PC-9 (cell line): ENCODE measurements at regions of chr13 and their contacts with region 1.

Region 1: GRCh38 chr13:59658027-59658737 is 505.5 kb downstream of the DIAPH3 start:
- DNase-seq: no peak
- H3K4me3 ChIP-seq: no peak overlapping the region
- H3K27ac ChIP-seq: no peak overlapping the region
- H3K4me1 ChIP-seq: no peaks in the 10 kb centered on the region
- H3K27me3 ChIP-seq: no peaks in the 10 kb centered on the region
- CTCF ChIP-seq: no peak

Region 2: DNA sequence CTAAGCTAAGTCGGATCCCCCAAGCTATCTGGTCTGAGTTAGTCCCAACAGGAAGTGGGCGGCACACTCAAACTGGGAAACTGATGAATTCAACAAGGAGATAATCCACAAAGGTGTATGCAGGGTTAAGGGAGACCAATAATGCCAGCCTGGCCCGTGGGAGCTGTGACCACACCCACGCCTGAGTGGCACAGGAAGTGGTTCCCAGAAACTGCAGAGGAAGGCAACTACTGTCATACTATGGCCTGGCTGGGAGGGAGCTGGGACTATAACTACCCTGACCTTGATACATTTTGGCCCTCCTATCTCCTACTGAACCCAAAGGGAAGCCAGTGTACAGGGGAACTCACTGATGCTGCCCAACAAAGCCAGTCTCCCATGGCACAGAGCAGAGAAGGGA is 653.3 kb after region 1 on chr13:
- CTCF ChIA-PET with region 1: no interaction called
- POLR2A ChIA-PET with region 1: no interaction called
- intact Hi-C with region 1: no loop called
- DNase-seq: no peak
- H3K4me3 ChIP-seq: no peak overlapping the region
- H3K27ac ChIP-seq: no peak overlapping the region
- H3K4me1 ChIP-seq: no peaks in the 10 kb centered on the region
- H3K27me3 ChIP-seq: no peaks in the 10 kb centered on the region
- CTCF ChIP-seq: no peak

Region 3: GRCh38 chr13:60617991-60618733 is 960.0 kb after region 1 on chr13:
- CTCF ChIA-PET with region 1: interaction called, 14 read pairs
- POLR2A ChIA-PET with region 1: no interaction called
- intact Hi-C with region 1: no loop called
- DNase-seq: peak in 1 of 2 experiments; percentile 1
- H3K4me3 ChIP-seq: no peak overlapping the region
- H3K27ac ChIP-seq: no peak overlapping the region
- H3K4me1 ChIP-seq: no peaks in the 10 kb centered on the region
- H3K27me3 ChIP-seq: peaks cover 10% of the 10 kb centered on the region
- CTCF ChIP-seq: no peak; the same call in 1 of the 2 replicates